ENCODE measurements at regions of chr14 and their contacts with region 1.

Region 1: DNA sequence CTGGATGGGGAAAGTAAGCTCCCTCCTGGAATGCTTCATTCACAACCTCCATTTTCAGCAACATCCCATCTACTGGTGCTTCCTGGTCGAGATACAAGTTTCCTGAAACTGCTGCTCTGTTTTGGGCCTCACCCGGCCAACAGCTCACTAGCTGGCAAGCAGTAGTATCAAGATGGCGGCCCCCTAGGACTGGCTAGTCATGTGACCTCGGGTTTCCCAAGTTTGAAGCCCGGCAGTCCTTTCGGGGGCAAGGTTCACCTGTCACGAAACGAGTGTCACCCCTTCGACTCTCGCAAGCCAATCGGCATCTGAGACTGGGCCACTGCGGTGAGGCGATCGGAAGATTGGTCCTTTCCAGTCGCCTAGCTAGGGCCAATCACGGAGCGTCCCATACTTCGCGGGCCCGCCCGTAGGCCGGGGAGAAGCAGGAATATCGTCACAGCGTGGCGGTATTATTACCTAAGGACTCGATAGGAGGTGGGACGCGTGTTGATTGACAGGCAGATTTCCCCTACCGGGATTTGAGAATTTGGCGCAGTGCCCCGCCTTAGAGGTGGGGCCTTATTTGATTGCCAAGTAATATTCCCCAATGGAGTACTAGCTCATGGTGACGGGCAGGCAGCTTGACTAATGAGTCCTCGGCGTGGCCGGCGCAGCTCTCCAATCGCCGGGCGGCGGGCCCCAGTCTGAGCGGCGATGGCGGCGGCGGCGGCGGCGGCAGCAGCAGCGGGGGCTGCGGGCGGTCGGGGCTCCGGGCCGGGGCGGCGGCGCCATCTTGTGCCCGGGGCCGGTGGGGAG is at the start of gene PABPN1:
- DNase-seq: peak; percentile 98 to 99
- ATAC-seq: peak; percentile 92 to 94 (median 92)
- H3K4me3 ChIP-seq: peak within 1 kb of the TSS; percentile 98
- H3K27ac ChIP-seq: peak within 1 kb of the TSS; percentile 97
- H3K4me1 ChIP-seq: peaks cover 15% of the 10 kb centered on the region
- H3K27me3 ChIP-seq: no peaks in the 10 kb centered on the region
- CTCF ChIP-seq: no peak
- total RNA-seq, gene PABPN1: 65.2 to 84.0 (median 79.6) TPM

Region 2: DNA sequence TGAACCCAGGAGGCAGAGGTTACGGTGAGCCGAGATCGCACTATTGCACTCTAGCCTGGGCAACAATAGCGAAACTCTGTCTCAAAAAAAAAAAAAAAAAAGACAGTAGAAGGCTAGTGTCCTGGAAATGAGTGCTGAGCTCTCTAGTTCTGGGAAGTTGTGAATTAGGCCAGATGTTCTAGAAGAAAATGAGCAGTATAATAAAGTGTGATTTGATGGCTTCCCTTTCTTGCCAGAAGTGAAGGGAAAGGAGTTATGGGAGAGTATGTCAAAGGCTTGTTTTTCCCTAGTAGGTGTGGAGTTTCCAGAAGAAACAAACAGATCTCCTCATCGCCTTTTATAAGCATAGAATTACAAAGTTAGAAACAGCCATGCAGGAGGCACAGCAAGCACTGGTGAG is 62.7 kb before region 1 on chr14:
- intact Hi-C with region 1: no loop called
- DNase-seq: no peak
- ATAC-seq: no peak
- H3K4me3 ChIP-seq: no peak overlapping the region
- H3K27ac ChIP-seq: no peak overlapping the region
- H3K4me1 ChIP-seq: no peaks in the 10 kb centered on the region
- H3K27me3 ChIP-seq: peaks cover 0 to 30% (median 2%) of the 10 kb centered on the region in 3 donors
- CTCF ChIP-seq: no peak

Region 3: GRCh38 chr14:23294734-23295561 is 26.0 kb before region 1 on chr14:
- intact Hi-C with region 1: no loop called
- DNase-seq: peak; percentile 32 to 58
- ATAC-seq: peak; percentile 71 to 86 (median 77)
- H3K4me3 ChIP-seq: peak overlapping the region; percentile 38
- H3K27ac ChIP-seq: no peak overlapping the region
- H3K4me1 ChIP-seq: peaks cover 24% of the 10 kb centered on the region
- H3K27me3 ChIP-seq: no peaks in the 10 kb centered on the region
- CTCF ChIP-seq: peak; percentile 79

Region 4: DNA sequence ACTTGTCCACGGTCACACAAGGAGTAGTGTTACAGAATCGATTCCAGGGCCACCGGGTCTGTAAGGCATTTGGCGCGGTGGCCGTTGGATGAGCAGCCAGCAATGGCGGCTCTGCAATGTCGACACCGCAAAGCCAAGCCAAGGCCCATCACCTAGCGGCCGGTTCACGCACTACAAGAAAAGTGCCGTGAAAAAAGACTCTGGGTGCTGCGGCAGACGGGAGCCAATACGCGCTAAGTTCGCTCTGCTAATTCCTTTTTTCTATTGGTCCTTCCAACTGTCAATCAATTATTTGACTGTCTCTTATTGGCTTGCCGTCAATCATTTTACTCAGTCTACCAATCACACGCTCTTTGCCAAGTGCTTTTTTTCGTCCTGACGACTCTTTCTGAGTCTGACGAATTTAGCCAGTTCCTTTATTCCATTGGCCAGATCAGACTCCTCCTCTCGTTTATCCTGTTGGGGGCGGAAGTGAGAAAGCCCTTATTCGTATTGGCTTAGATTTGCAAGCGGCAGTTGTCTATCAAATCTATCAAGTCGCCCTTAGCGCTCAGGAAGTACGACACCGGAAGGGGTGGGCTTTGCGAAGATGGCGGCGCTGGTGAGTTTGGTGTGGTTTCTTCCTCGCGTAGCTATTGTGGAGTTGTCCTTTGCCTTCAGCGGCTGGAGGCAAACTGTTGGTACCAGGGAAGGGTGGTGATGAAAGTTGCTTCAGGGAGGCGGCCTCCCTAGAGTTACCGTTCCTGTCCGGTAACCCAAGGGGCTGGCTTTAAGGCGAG is 148.3 kb after region 1 on chr14 and contains the start of gene NGDN:
- intact Hi-C with region 1: loop called in 1 of 2 experiments (anchors 5 kb)
- DNase-seq: peak; percentile 95 to 96
- ATAC-seq: peak; percentile 93 to 95 (median 93)
- H3K4me3 ChIP-seq: peak within 1 kb of the TSS; percentile 86
- H3K27ac ChIP-seq: peak within 1 kb of the TSS; percentile 89
- H3K4me1 ChIP-seq: peaks cover 10% of the 10 kb centered on the region
- H3K27me3 ChIP-seq: no peaks in the 10 kb centered on the region
- CTCF ChIP-seq: peak; percentile 82
- total RNA-seq, gene NGDN: 20.3 to 49.9 (median 30.1) TPM

Region 5: GRCh38 chr14:23555882-23556699 is 235.1 kb after region 1 on chr14 and contains the start of gene THTPA:
- intact Hi-C with region 1: loop called (anchors 5 to 10 kb)
- DNase-seq: peak; percentile 93 to 95
- ATAC-seq: peak; percentile 91 to 94 (median 93)
- H3K4me3 ChIP-seq: peak within 1 kb of the TSS; percentile 99
- H3K27ac ChIP-seq: peak within 1 kb of the TSS; percentile 99
- H3K4me1 ChIP-seq: peaks cover 22% of the 10 kb centered on the region
- H3K27me3 ChIP-seq: no peaks in the 10 kb centered on the region
- CTCF ChIP-seq: no peak
- total RNA-seq, gene THTPA: 18.5 to 29.9 (median 23.2) TPM

Region 6: GRCh38 chr14:23881282-23881681 is 560.3 kb after region 1 on chr14:
- intact Hi-C with region 1: no loop called
- DNase-seq: no peak
- ATAC-seq: peak in 1 of 4 donors; percentile 62
- H3K4me3 ChIP-seq: no peak overlapping the region
- H3K27ac ChIP-seq: no peak overlapping the region
- H3K4me1 ChIP-seq: no peaks in the 10 kb centered on the region
- H3K27me3 ChIP-seq: no peaks in the 10 kb centered on the region
- CTCF ChIP-seq: no peak